Naive thymus-derived CD4-positive, alpha-beta T cell (primary cell): ENCODE measurements at regions of chr2 and their contacts with region 1.

Region 1: DNA sequence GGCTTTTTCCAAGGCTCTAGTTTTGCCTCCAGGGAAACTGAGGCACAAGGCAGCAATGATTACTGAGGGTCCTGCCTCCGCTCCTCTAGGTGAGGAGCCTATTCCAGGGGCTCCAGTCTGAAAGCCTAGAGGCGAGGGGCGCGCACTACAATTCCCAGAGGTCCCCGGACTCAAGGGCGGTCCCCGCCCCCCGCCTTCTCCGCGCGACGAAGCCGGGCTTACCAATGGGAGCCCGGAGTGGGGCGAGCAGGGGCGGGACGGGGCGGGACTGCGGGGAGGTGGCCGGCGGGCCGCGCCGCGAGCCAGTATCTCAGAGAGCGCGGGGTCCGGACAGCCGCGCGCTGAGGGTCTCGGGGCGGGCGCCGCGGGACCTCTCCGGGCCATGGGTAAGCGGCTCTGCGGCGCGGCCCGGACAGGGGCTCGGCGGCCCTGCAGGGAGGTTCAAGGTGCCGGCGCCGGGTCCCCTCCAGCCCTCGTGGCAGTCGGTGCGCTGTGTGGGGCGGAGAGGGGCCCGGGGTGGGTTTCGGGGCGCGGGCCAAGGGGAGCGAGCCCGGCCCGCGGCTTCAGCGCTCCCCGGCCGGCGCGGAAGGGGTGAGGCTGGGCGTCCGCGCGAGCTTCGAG is at the start of gene ARID5A:
- DNase-seq: peak; percentile 82 to 93 (median 88)
- ATAC-seq: peak; percentile 70
- H3K4me3 ChIP-seq: peak within 1 kb of the TSS; percentile 84
- H3K4me3 Mint-ChIP-seq: peak within 1 kb of the TSS; percentile 91 to 98 (median 96)
- H3K27ac ChIP-seq: peak within 1 kb of the TSS; percentile 99
- H3K27ac Mint-ChIP-seq: peak within 1 kb of the TSS; percentile 97 to 100 (median 99)
- H3K4me1 ChIP-seq: peaks cover 39 to 41% of the 10 kb centered on the region in 2 donors
- H3K4me1 Mint-ChIP-seq: peaks cover 37 to 74% (median 50%) of the 10 kb centered on the region in 7 donors
- H3K27me3 ChIP-seq: no peaks in the 10 kb centered on the region
- H3K27me3 Mint-ChIP-seq: no peaks in the 10 kb centered on the region
- total RNA-seq, gene ARID5A: 82.4 to 182 (median 113) TPM

Region 2: GRCh38 chr2:96208143-96209010 is 328.2 kb before region 1 on chr2 and contains the start of gene STARD7:
- CTCF ChIA-PET with region 1: no interaction called
- POLR2A ChIA-PET with region 1: interaction called, 5 read pairs
- intact Hi-C with region 1: loop called (anchors 1 to 2 kb)
- DNase-seq: peak; percentile 93 to 97 (median 95)
- ATAC-seq: peak; percentile 92
- H3K4me3 ChIP-seq: peak within 1 kb of the TSS; percentile 83
- H3K4me3 Mint-ChIP-seq: peak within 1 kb of the TSS; percentile 88 to 100 (median 95)
- H3K27ac ChIP-seq: peak within 1 kb of the TSS; percentile 87
- H3K27ac Mint-ChIP-seq: peak within 1 kb of the TSS; percentile 86 to 99 (median 93)
- H3K4me1 ChIP-seq: peaks cover 30 to 37% of the 10 kb centered on the region in 2 donors
- H3K4me1 Mint-ChIP-seq: peaks cover 37 to 57% (median 51%) of the 10 kb centered on the region in 7 donors
- H3K27me3 ChIP-seq: no peaks in the 10 kb centered on the region
- H3K27me3 Mint-ChIP-seq: no peaks in the 10 kb centered on the region
- total RNA-seq, gene STARD7: 56.5 to 133 (median 74.2) TPM

Region 3: GRCh38 chr2:96407041-96407918 is 129.3 kb before region 1 on chr2:
- CTCF ChIA-PET with region 1: interaction called, 4 read pairs
- POLR2A ChIA-PET with region 1: interaction called, 84 read pairs
- intact Hi-C with region 1: loop called (anchors 1 kb)
- DNase-seq: peak; percentile 48 to 92 (median 88)
- ATAC-seq: peak; percentile 94
- H3K4me3 ChIP-seq: peak overlapping the region; percentile 49
- H3K4me3 Mint-ChIP-seq: peak overlapping the region; percentile 67 to 91 (median 83)
- H3K27ac ChIP-seq: peak overlapping the region; percentile 33
- H3K27ac Mint-ChIP-seq: peak overlapping the region; percentile 89 to 100 (median 96)
- H3K4me1 ChIP-seq: peaks cover 19 to 31% of the 10 kb centered on the region in 2 donors
- H3K4me1 Mint-ChIP-seq: peaks cover 18 to 51% (median 36%) of the 10 kb centered on the region in 7 donors
- H3K27me3 ChIP-seq: no peaks in the 10 kb centered on the region
- H3K27me3 Mint-ChIP-seq: no peaks in the 10 kb centered on the region

Region 4: GRCh38 chr2:96517079-96517478 is 19.5 kb before region 1 on chr2:
- CTCF ChIA-PET with region 1: interaction called, 3 read pairs
- POLR2A ChIA-PET with region 1: interaction called, 10 read pairs
- intact Hi-C with region 1: no loop called
- DNase-seq: no peak
- ATAC-seq: no peak
- H3K4me3 ChIP-seq: no peak overlapping the region
- H3K4me3 Mint-ChIP-seq: no peak overlapping the region
- H3K27ac ChIP-seq: no peak overlapping the region
- H3K27ac Mint-ChIP-seq: no peak overlapping the region
- H3K4me1 ChIP-seq: no peaks in the 10 kb centered on the region
- H3K4me1 Mint-ChIP-seq: peaks cover 0 to 16% (median 0%) of the 10 kb centered on the region in 7 donors
- H3K27me3 ChIP-seq: no peaks in the 10 kb centered on the region
- H3K27me3 Mint-ChIP-seq: no peaks in the 10 kb centered on the region

Region 5: DNA sequence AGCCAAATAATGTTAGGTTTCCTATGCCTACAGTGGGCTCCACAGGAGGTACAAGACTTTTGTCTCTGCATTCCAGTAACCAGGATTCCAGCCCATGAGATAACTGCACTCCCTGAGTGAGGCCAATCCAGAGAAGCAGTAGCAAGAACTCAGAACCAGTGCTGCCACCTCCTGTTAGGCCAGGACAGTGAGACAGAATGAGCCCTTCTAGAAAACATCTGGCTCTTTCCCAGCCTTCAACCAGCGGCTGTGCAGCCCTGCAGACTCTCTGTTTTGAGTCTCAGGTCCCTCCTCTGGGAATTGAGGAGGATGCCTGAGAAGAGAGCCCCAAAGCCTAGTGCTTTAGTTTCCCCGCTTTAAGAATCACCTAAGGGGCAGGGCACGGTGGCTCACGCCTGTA is 44.2 kb after region 1 on chr2:
- CTCF ChIA-PET with region 1: no interaction called
- POLR2A ChIA-PET with region 1: no interaction called
- intact Hi-C with region 1: no loop called
- DNase-seq: no peak
- ATAC-seq: no peak
- H3K4me3 ChIP-seq: no peak overlapping the region
- H3K4me3 Mint-ChIP-seq: no peak overlapping the region
- H3K27ac ChIP-seq: no peak overlapping the region
- H3K27ac Mint-ChIP-seq: no peak overlapping the region
- H3K4me1 ChIP-seq: no peaks in the 10 kb centered on the region
- H3K4me1 Mint-ChIP-seq: peaks cover 0 to 2% (median 0%) of the 10 kb centered on the region in 7 donors
- H3K27me3 ChIP-seq: no peaks in the 10 kb centered on the region
- H3K27me3 Mint-ChIP-seq: peaks cover 0 to 4% (median 0%) of the 10 kb centered on the region in 5 donors

Region 6: GRCh38 chr2:96638144-96639121 is 101.9 kb after region 1 on chr2 and contains the start of gene KANSL3:
- CTCF ChIA-PET with region 1: no interaction called
- POLR2A ChIA-PET with region 1: interaction called, 15 read pairs
- intact Hi-C with region 1: loop called (anchors 2 kb)
- DNase-seq: peak; percentile 81 to 96 (median 88)
- ATAC-seq: peak; percentile 93
- H3K4me3 ChIP-seq: peak within 1 kb of the TSS; percentile 97
- H3K4me3 Mint-ChIP-seq: peak within 1 kb of the TSS; percentile 89 to 96 (median 93)
- H3K27ac ChIP-seq: peak within 1 kb of the TSS; percentile 90
- H3K27ac Mint-ChIP-seq: peak within 1 kb of the TSS; percentile 87 to 95 (median 92)
- H3K4me1 ChIP-seq: peaks cover 18% of the 10 kb centered on the region in 2 donors
- H3K4me1 Mint-ChIP-seq: peaks cover 28 to 46% (median 39%) of the 10 kb centered on the region in 7 donors
- H3K27me3 ChIP-seq: no peaks in the 10 kb centered on the region
- H3K27me3 Mint-ChIP-seq: peaks cover 0 to 10% (median 0%) of the 10 kb centered on the region in 5 donors
- total RNA-seq, gene KANSL3: 54.0 to 65.0 (median 55.9) TPM

Region 7: GRCh38 chr2:96856776-96857673 is 320.5 kb after region 1 on chr2:
- CTCF ChIA-PET with region 1: no interaction called
- POLR2A ChIA-PET with region 1: no interaction called
- intact Hi-C with region 1: loop called in 1 of 2 experiments (anchors 5 kb)
- DNase-seq: peak in 5 of 9 donors; percentile 27 to 39 (median 35)
- ATAC-seq: no peak
- H3K4me3 ChIP-seq: peak overlapping the region; percentile 72
- H3K4me3 Mint-ChIP-seq: peak overlapping the region; percentile 85 to 93 (median 89)
- H3K27ac ChIP-seq: peak overlapping the region; percentile 79
- H3K27ac Mint-ChIP-seq: peak overlapping the region; percentile 38 to 92 (median 84)
- H3K4me1 ChIP-seq: peaks cover 14 to 16% of the 10 kb centered on the region in 2 donors
- H3K4me1 Mint-ChIP-seq: peaks cover 21 to 57% (median 43%) of the 10 kb centered on the region in 7 donors
- H3K27me3 ChIP-seq: no peaks in the 10 kb centered on the region
- H3K27me3 Mint-ChIP-seq: no peaks in the 10 kb centered on the region